ENCODE measurements at regions of chr2 and their contacts with region 1.

Region 1: GRCh38 chr2:27428213-27428977 is at the start of gene NRBP1:
- DNase-seq: peak; percentile 93
- H3K4me3 Mint-ChIP-seq: peak within 1 kb of the TSS; percentile 97
- H3K27ac Mint-ChIP-seq: peak within 1 kb of the TSS; percentile 97
- H3K4me1 Mint-ChIP-seq: peaks cover 37% of the 10 kb centered on the region
- H3K27me3 Mint-ChIP-seq: no peaks in the 10 kb centered on the region
- total RNA-seq, gene NRBP1: 99.7 and 106 TPM in 2 replicates

Region 2: DNA sequence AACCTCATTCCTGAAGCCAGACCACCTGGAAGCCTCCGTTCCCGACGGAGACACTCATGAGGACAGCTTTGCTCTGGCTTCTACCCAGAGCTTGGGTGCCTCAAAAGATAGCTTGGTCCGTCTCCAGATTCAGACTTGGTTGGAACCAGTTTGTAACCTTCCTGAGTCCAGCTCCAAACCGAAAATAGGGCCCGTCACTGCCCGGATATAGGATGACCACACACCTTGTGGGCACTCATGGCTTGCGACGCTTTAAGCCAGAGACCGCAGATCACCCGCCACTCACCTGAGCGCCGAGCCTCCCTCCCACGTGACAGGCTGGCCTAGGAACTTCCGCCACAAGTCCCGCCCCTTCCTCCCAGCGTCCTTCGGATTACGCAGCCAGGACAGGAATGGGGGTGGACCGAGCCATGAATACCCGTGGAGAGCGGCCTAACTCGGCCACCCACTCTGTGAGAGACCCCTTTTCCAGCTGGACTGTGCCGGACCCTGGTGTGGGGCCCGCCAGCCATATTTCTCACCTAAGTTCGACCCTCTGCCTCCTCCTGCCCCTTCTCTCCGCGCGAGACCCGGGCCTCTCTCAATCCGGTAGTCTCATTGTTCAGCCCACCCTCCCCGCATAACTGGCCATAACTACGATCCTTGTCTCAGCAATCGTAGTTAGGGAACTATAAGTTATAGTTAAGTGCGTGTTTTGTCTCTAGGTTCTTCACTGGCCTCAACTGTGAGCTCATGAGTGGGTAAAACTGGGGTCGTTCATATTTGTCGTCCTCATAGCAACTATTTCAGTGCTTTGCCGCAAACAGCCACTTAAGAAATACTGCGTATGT is 105.4 kb before region 1 on chr2 and contains the start of gene MPV17:
- intact Hi-C with region 1: loop called (anchors 2 kb)
- DNase-seq: peak; percentile 84
- H3K4me3 Mint-ChIP-seq: peak within 1 kb of the TSS; percentile 99
- H3K27ac Mint-ChIP-seq: peak within 1 kb of the TSS; percentile 88
- H3K4me1 Mint-ChIP-seq: peaks cover 32% of the 10 kb centered on the region
- H3K27me3 Mint-ChIP-seq: no peaks in the 10 kb centered on the region
- total RNA-seq, gene MPV17: 85.9 and 89.9 TPM in 2 replicates

Region 3: DNA sequence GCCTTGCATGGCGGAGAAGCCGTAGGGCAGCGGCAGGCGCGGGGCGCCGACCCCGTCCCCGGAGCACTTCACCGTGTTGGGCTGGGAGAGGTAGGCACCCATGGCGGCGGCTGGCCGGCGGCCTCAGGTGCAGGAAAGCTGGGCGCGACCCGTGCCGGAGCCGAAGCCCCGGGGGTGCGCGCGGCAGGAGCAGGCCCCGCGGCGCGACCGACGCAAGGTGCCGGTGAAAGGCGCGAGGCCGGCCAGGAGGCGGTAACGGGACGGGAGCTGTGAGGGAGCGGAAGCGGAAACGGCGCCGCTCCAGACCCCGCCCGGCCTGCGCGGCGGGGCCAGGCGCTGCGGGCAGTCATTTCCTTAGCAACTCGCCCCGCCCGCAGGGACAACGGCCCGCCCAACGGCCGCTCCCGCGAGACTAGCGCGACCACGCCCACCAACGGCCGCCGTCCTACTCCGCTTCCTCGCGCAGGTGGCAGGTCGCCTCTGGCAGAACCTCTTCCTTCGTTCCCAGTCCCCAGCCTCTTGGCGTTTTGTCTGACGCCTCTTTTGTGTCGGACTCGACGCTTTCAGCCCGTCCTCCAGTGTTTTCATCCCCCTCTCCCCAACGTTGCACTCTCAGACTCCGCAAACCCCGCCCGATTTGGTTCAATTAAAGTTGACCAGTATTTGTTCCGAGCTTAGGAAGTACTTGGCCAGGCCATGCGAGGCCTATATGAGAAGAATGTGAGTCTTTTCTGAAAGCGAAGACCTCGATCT is 18.9 kb before region 1 on chr2 and contains the start of gene PPM1G:
- intact Hi-C with region 1: loop called (anchors 1 kb)
- DNase-seq: peak; percentile 95
- H3K4me3 Mint-ChIP-seq: peak within 1 kb of the TSS; percentile 90
- H3K27ac Mint-ChIP-seq: peak within 1 kb of the TSS; percentile 89
- H3K4me1 Mint-ChIP-seq: peaks cover 29% of the 10 kb centered on the region
- H3K27me3 Mint-ChIP-seq: peaks cover 2% of the 10 kb centered on the region
- total RNA-seq, gene PPM1G: 158 and 160 TPM in 2 replicates

Region 4: DNA sequence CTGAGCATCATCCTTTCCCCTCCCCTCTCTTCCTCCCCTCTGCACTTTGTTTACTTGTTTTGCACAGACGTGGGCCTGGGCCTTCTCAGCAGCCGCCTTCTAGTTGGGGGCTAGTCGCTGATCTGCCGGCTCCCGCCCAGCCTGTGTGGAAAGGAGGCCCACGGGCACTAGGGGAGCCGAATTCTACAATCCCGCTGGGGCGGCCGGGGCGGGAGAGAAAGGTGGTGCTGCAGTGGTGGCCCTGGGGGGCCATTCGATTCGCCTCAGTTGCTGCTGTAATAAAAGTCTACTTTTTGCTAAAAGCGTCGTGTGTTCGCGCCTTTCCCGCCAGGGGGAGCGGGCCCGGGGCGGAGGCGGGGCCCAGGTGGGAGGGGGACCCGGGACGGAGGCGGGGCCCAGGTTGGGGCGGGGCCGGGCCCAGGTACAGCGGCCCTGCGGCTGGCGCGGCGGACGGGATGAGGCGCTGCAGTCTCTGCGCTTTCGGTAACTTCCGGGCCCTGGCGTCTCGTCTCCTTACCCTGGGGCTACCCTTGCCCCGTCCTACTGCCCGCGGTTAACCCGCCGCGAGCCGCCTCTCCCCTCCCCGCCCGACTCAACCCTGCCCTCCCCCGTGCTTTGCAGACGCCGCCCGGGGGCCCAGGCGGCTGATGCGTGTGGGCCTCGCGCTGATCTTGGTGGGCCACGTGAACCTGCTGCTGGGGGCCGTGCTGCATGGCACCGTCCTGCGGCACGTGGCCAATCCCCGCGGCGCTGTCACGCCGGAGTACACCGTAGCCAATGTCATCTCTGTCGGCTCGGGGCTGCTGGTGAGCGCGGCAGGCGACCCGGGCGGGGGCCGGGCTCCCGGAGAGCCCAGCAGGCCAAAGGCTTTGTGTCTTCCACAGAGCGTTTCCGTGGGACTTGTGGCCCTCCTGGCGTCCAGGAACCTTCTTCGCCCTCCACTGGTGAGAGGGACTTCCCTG is 13.8 kb after region 1 on chr2 and contains the start of gene KRTCAP3:
- intact Hi-C with region 1: no loop called
- DNase-seq: no peak
- H3K4me3 Mint-ChIP-seq: no peak within 1 kb of the TSS
- H3K27ac Mint-ChIP-seq: no peak within 1 kb of the TSS
- H3K4me1 Mint-ChIP-seq: peaks cover 8% of the 10 kb centered on the region
- H3K27me3 Mint-ChIP-seq: no peaks in the 10 kb centered on the region
- total RNA-seq, gene KRTCAP3: 3.5 and 5.7 TPM in 2 replicates

Region 5: DNA sequence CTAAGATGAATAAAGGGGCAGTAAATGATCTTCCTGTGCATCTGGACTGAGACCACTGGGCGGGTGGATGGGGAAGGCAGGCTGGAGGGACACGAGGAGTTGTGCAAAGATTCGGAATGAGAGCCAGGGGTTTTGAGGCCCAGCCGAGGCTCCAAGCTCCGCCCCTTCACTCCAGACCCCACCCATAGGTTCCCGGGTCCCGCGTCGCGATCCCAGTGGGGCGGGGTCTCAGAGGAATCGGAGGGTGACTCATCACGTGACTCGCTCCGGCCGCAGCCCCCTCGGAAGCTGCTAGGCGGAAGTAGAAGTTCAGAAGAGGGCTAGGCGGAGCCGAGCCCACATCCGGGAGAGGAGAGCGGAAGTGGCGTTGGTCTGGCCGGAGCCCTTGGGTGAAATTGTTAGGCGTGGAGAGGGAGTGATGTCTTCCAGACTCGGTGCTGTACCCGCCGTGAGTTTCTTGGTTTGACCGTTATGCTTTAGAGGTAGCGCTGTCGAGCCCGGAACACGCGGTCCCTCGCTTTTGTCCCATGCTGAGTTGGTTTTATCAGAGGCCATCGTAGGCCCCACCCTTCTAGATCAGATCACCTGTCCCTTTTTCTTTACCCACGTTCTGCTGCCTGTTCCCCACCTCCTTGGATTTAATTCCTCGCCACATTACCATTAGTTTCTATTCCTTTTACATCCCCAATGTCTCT is 154.4 kb after region 1 on chr2 and contains the start of gene ZNF512:
- intact Hi-C with region 1: loop called (anchors 2 kb)
- DNase-seq: peak; percentile 75
- H3K4me3 Mint-ChIP-seq: peak within 1 kb of the TSS; percentile 86
- H3K27ac Mint-ChIP-seq: peak within 1 kb of the TSS; percentile 79
- H3K4me1 Mint-ChIP-seq: peaks cover 45% of the 10 kb centered on the region
- H3K27me3 Mint-ChIP-seq: peaks cover 7% of the 10 kb centered on the region
- total RNA-seq, gene ZNF512: 24.6 and 25.0 TPM in 2 replicates

Region 6: GRCh38 chr2:27663463-27664249 is 235.3 kb after region 1 on chr2 and contains the starts of genes SLC4A1AP and SUPT7L:
- intact Hi-C with region 1: loop called (anchors 2 kb)
- DNase-seq: peak; percentile 70
- H3K4me3 Mint-ChIP-seq: peak within 1 kb of the TSS; percentile 96
- H3K27ac Mint-ChIP-seq: peak within 1 kb of the TSS; percentile 97
- H3K4me1 Mint-ChIP-seq: peaks cover 55% of the 10 kb centered on the region
- H3K27me3 Mint-ChIP-seq: no peaks in the 10 kb centered on the region
- total RNA-seq, gene SLC4A1AP: 29.7 and 29.8 TPM in 2 replicates
- total RNA-seq, gene SUPT7L: 32.5 and 35.2 TPM in 2 replicates